Caco-2 (cell line): ENCODE measurements at regions of chr1 and their contacts with region 1.

Region 1: DNA sequence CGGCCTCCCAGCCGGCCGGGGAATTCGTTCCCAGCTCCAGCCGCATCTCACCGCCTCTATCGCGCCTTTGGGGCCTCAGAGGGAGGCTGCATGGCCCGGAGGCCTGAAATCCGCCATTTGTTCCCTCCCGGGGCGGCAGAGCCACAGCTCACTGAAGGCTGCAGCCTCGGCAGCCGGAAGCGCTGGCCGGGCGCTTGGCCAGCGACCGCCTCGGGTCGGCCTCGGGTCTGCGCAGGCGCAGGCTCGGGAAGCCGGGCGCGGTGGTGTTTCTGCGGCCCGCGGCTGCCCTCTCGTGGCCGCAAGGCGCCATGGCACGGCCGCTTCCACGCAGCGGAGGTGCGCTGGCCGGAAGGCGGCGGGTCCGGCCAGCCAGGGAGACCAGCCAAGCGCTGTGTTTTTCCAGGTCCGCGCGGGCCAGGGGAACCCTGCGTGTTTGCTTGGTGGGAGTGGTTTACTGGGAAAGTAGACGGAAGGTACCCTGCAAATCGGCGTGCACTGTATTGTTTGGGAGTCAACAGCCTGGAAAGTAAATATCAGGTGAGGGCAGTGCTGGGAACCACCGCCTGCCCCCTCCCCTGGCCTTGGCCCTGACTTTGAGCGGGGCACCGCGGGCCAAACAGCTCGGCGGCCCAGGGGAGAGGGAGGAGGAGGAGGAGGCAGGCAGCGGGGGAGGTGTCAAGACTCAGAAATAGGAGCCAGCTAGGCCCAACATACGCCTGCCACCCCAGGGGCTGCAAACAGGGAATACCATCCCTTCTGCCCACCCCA is 52.7 kb upstream of the CD34 start:
- DNase-seq: peak; percentile 77 to 93
- H3K4me3 ChIP-seq: peak overlapping the region; percentile 61
- H3K4me3 Mint-ChIP-seq: peak overlapping the region; percentile 58
- H3K27ac Mint-ChIP-seq: peak overlapping the region; percentile 12
- H3K4me1 ChIP-seq: peaks cover 10% of the 10 kb centered on the region; the same call in 1 of the 2 replicates
- H3K4me1 Mint-ChIP-seq: no peaks in the 10 kb centered on the region
- H3K27me3 ChIP-seq: no peaks in the 10 kb centered on the region
- H3K27me3 Mint-ChIP-seq: peaks cover 6% of the 10 kb centered on the region
- CTCF ChIP-seq: peak; percentile 89 to 97

Region 2: GRCh38 chr1:207276465-207276864 is 687.1 kb before region 1 on chr1:
- CTCF ChIA-PET with region 1: interaction called, 14 read pairs
- POLR2A ChIA-PET with region 1: no interaction called
- intact Hi-C with region 1: no loop called
- DNase-seq: no peak
- H3K4me3 ChIP-seq: no peak overlapping the region
- H3K4me3 Mint-ChIP-seq: no peak overlapping the region
- H3K27ac Mint-ChIP-seq: no peak overlapping the region
- H3K4me1 ChIP-seq: 0 out of 2 replicates have a peak, but pooled peaks cover under 1% of the 10 kb centered on the region
- H3K4me1 Mint-ChIP-seq: peaks cover under 1% of the 10 kb centered on the region
- H3K27me3 ChIP-seq: no peaks in the 10 kb centered on the region
- H3K27me3 Mint-ChIP-seq: no peaks in the 10 kb centered on the region
- CTCF ChIP-seq: no peak

Region 3: DNA sequence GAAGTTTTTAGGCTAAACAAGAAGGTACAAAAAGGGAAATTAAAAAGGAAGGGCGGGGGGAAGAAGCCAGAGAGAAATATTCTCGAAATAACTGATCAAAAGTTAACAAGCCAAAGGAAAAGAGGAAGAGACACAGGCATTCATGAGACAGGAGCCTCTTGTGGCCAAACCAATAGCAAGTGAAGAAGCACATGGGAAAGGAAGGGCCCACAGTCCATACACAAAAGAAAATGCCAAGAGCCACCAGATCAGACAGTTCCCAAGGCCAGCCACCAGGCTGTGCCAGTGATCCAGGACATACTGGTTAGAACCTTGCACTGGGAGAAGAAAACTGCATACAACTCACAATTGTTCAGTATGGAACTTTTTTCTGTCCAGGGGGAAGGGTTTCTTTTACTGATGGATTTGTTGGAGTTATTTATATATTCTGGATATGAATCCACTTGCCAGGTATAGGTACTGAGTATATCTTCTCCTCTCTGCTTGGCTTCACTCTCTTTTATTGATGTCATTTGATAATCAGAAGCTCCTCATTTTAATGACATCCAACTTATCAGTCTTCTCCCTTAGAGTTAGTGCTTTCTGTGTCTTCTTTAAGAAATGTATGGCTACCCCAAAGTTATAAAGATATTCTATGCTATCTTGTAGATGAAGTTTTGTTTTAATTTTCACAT is 135.0 kb before region 1 on chr1:
- CTCF ChIA-PET with region 1: interaction called, 13 read pairs
- POLR2A ChIA-PET with region 1: interaction called, 4 read pairs
- intact Hi-C with region 1: loop called (anchors 1 kb)
- DNase-seq: peak; percentile 81 to 86
- H3K4me3 ChIP-seq: no peak overlapping the region
- H3K4me3 Mint-ChIP-seq: no peak overlapping the region
- H3K27ac Mint-ChIP-seq: peak overlapping the region; percentile 81
- H3K4me1 ChIP-seq: peaks cover 40% of the 10 kb centered on the region
- H3K4me1 Mint-ChIP-seq: peaks cover 39% of the 10 kb centered on the region
- H3K27me3 ChIP-seq: no peaks in the 10 kb centered on the region
- H3K27me3 Mint-ChIP-seq: no peaks in the 10 kb centered on the region
- CTCF ChIP-seq: peak; percentile 85 to 91

Region 4: DNA sequence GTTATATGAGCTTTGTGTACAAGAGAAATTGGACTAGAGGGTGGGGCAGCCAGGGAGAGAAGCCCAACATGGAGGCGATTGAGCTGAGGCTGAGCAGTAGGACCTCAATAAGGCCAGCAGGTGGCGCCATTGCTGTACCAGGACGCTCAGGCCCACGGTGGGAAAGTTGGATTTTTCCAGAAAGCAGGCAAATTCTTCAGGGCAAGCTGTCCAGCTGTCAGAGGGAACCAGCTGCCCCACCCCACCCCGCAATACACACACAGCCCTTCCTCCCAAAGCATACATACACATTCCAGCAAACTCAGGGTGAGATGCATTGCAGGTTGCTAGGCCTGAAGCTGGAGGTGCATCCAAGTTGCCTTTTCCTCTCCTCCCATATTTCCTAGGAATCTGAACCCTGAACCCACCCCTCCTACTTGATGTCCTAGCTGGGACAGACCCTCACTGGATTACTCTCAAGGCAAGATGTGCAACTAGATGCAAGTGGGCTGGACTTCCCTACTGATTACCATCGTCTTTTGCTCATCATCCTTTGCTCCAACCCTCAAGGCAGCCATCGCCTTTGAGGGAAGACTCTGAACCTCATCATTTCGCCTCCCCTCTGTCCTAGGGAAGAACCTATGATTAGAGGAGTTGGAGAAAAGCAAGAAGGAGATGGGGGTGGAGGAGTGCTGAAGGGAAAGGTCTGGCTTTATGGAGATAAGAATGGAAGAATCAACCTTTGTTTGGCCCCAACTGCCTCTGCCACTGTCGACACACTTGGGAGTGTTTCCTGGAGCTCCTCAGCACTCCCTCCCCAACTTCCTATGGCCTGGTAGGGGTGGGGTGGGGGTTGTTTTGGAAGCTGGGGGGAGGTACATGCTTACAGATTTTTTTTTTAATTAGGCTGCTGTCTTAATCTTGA is 78.2 kb before region 1 on chr1:
- CTCF ChIA-PET with region 1: interaction called, 113 read pairs
- POLR2A ChIA-PET with region 1: interaction called, 7 read pairs
- intact Hi-C with region 1: loop called (anchors 1 kb)
- DNase-seq: peak; percentile 87
- H3K4me3 ChIP-seq: no peak overlapping the region
- H3K4me3 Mint-ChIP-seq: no peak overlapping the region
- H3K27ac Mint-ChIP-seq: peak overlapping the region; percentile 42
- H3K4me1 ChIP-seq: peaks cover 8% of the 10 kb centered on the region
- H3K4me1 Mint-ChIP-seq: peaks cover 6% of the 10 kb centered on the region
- H3K27me3 ChIP-seq: no peaks in the 10 kb centered on the region
- H3K27me3 Mint-ChIP-seq: peaks cover under 1% of the 10 kb centered on the region
- CTCF ChIP-seq: peak; percentile 94 to 95

Region 5: DNA sequence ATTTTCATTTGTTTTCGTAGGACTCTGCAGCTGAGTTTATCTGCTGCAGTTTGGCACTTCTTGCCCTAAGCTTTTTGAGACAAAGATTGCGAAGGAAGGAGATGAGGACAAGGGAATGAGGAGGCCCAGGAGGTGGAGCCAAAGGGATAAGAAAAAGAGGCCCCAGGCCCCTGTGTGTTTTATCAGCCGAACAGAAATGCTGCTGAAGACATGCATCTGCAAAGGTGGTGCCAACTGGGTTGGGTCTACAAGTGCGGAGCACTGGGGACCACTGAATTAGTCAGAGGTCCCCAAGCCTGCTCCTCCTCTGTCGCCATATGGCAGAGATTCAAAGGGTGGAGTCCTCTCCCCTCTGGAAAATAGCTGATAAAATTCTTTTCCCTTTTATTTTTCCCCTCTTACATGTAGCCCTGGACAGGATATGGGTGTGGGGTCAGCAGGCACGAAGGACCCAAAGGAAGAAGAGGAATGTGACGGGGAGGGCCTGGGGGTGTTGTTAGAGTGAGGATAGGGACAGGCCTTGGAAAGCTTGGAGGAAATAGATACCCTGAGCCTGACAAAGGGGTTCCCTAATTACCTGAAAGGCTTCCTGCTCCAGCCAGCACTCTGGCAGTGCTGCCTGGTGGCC is 55.4 kb before region 1 on chr1:
- CTCF ChIA-PET with region 1: interaction called, 16 read pairs
- POLR2A ChIA-PET with region 1: no interaction called
- intact Hi-C with region 1: loop called (anchors 1 kb)
- DNase-seq: no peak
- H3K4me3 ChIP-seq: no peak overlapping the region
- H3K4me3 Mint-ChIP-seq: no peak overlapping the region
- H3K27ac Mint-ChIP-seq: no peak overlapping the region
- H3K4me1 ChIP-seq: no peaks in the 10 kb centered on the region
- H3K4me1 Mint-ChIP-seq: peaks cover 8% of the 10 kb centered on the region
- H3K27me3 ChIP-seq: no peaks in the 10 kb centered on the region; the same call in 1 of the 2 replicates
- H3K27me3 Mint-ChIP-seq: peaks cover 4% of the 10 kb centered on the region
- CTCF ChIP-seq: peak in 1 of 2 experiments; percentile 18

Region 6: DNA sequence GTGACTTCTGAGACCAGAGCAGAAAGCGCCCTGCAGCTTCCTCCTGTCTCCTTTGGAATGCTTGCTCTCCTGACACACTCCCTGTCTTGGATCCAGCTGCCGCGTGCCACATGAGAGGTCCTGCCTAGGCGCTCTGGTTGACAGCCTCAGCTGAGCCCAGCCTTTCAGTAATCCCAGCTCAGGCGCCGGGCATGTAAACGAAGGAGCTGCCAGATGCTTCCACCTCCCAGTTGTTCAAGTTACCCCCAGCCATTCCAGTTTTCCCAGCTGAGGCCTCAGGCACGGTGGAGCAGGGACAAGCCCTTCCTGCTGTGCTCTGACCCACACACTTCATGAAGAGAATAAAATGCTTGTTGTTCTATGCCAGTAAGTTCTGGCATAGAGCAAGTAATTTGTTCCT is 38.4 kb before region 1 on chr1:
- CTCF ChIA-PET with region 1: interaction called, 11 read pairs
- POLR2A ChIA-PET with region 1: no interaction called
- intact Hi-C with region 1: no loop called
- DNase-seq: peak in 1 of 2 experiments; percentile 22
- H3K4me3 ChIP-seq: no peak overlapping the region
- H3K4me3 Mint-ChIP-seq: no peak overlapping the region
- H3K27ac Mint-ChIP-seq: no peak overlapping the region
- H3K4me1 ChIP-seq: peaks cover 4% of the 10 kb centered on the region; the same call in 1 of the 2 replicates
- H3K4me1 Mint-ChIP-seq: peaks cover 6% of the 10 kb centered on the region
- H3K27me3 ChIP-seq: no peaks in the 10 kb centered on the region
- H3K27me3 Mint-ChIP-seq: no peaks in the 10 kb centered on the region
- CTCF ChIP-seq: no peak

Region 7: DNA sequence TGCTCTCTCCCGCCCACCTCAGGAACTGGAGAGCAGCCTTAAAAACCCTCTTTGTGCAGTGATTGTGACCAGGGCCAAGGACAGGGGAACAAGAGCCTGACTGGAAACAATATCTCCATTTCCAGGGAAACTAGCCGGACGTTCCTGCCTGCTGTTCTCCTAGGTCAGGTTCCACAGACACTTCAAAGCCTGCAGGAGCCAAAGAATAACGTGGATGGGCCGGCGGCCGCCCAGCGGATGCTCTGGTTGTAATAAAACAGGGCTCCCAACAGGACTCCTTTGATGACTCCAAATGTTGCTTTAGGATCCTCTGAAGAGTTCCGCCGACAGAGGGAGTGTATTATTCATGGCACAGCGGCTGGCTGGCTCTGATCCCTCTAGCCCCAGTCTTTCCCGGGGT is 118.4 kb after region 1 on chr1:
- CTCF ChIA-PET with region 1: no interaction called
- POLR2A ChIA-PET with region 1: no interaction called
- intact Hi-C with region 1: no loop called
- DNase-seq: no peak
- H3K4me3 ChIP-seq: no peak overlapping the region
- H3K4me3 Mint-ChIP-seq: no peak overlapping the region
- H3K27ac Mint-ChIP-seq: no peak overlapping the region
- H3K4me1 ChIP-seq: no peaks in the 10 kb centered on the region
- H3K4me1 Mint-ChIP-seq: no peaks in the 10 kb centered on the region
- H3K27me3 ChIP-seq: no peaks in the 10 kb centered on the region; the same call in 1 of the 2 replicates
- H3K27me3 Mint-ChIP-seq: peaks cover 13% of the 10 kb centered on the region
- CTCF ChIP-seq: peak in 1 of 2 experiments; percentile 3